Endothelial cell of umbilical vein (primary cell): ENCODE measurements at regions of chr18 and their contacts with region 1.

Region 1: GRCh38 chr18:56789004-56789888 is 138.1 kb downstream of the WDR7 start:
- DNase-seq: peak; percentile 92
- H3K4me3 ChIP-seq: peak overlapping the region in 1 of 3 experiments; percentile 37
- H3K27ac ChIP-seq: peak overlapping the region; percentile 95
- H3K4me1 ChIP-seq: peaks cover 19% of the 10 kb centered on the region
- H3K27me3 ChIP-seq: no peaks in the 10 kb centered on the region
- CTCF ChIP-seq: peak; percentile 8 to 21
- POLR2A ChIP-seq: peak; percentile 20

Region 2: DNA sequence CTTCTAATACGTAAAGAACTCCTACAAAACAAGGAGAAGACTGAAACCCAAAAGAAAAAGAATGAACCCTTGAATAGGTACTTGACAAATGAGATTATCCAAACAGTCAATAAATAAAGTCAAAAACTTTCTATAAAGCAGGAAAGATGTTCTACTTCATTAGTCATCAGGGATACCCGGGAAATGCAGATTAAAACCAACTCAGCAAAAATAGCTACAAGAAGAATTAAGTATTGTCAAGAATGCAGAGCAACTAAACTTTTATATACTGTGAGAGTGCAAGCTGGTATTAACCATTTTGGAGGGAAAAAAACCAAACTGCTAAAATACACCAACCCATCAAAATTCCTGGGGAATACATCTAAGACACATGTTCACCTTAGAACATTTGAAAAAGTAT is 161.3 kb before region 1 on chr18:
- CTCF ChIA-PET with region 1: no interaction called
- POLR2A ChIA-PET with region 1: no interaction called
- dilution Hi-C with region 1: no loop called
- intact Hi-C with region 1: no loop called
- DNase-seq: no peak
- H3K4me3 ChIP-seq: no peak overlapping the region
- H3K27ac ChIP-seq: no peak overlapping the region
- H3K4me1 ChIP-seq: no peaks in the 10 kb centered on the region
- H3K27me3 ChIP-seq: no peaks in the 10 kb centered on the region
- CTCF ChIP-seq: no peak
- POLR2A ChIP-seq: no peak

Region 3: GRCh38 chr18:56775701-56776100 is 13.5 kb before region 1 on chr18:
- CTCF ChIA-PET with region 1: interaction called, 13 read pairs
- POLR2A ChIA-PET with region 1: no interaction called
- dilution Hi-C with region 1: no loop called
- intact Hi-C with region 1: no loop called
- DNase-seq: no peak
- H3K4me3 ChIP-seq: no peak overlapping the region
- H3K27ac ChIP-seq: no peak overlapping the region
- H3K4me1 ChIP-seq: no peaks in the 10 kb centered on the region
- H3K27me3 ChIP-seq: no peaks in the 10 kb centered on the region
- CTCF ChIP-seq: no peak
- POLR2A ChIP-seq: no peak

Region 4: GRCh38 chr18:56799756-56800155 is 10.5 kb after region 1 on chr18:
- CTCF ChIA-PET with region 1: interaction called, 15 read pairs
- POLR2A ChIA-PET with region 1: no interaction called
- dilution Hi-C with region 1: no loop called
- intact Hi-C with region 1: loop called (anchors 1 kb)
- DNase-seq: peak; percentile 70
- H3K4me3 ChIP-seq: no peak overlapping the region
- H3K27ac ChIP-seq: peak overlapping the region; percentile 13
- H3K4me1 ChIP-seq: peaks cover 13% of the 10 kb centered on the region
- H3K27me3 ChIP-seq: no peaks in the 10 kb centered on the region
- CTCF ChIP-seq: no peak
- POLR2A ChIP-seq: no peak

Region 5: DNA sequence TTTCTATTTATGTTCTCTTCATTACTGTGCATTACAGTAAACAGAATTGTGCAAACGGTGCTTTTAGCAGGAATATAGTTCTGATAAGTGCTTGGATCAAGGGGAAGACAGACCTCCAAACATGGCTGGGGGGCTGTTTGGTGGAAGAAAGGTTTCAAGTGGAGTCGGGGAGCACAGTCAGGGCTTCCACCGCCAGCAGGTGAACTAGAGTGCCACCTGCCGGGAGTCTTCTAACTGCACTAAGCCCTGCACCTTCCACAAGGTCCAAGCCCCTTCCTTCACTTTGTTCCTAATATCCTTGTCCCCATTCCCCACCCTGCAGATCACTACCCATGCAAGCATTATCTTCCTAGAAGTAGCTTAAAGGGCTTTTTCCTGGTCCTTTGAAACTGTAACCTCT is 657.1 kb after region 1 on chr18:
- CTCF ChIA-PET with region 1: no interaction called
- POLR2A ChIA-PET with region 1: no interaction called
- dilution Hi-C with region 1: no loop called
- intact Hi-C with region 1: loop called (anchors 1 kb)
- DNase-seq: no peak
- H3K4me3 ChIP-seq: no peak overlapping the region
- H3K27ac ChIP-seq: no peak overlapping the region
- H3K4me1 ChIP-seq: no peaks in the 10 kb centered on the region
- H3K27me3 ChIP-seq: peaks cover 30 to 39% of the 10 kb centered on the region in 2 experiments
- CTCF ChIP-seq: peak; percentile 48 to 76
- POLR2A ChIP-seq: no peak